ENCODE measurements at regions of chr5 and their contacts with region 1.

Region 1: GRCh38 chr5:40736103-40736875 is 19.5 kb downstream of the TTC33 start:
- DNase-seq: no peak
- H3K4me3 ChIP-seq: no peak overlapping the region
- CTCF ChIP-seq: peak; percentile 52

Region 2: GRCh38 chr5:39948867-39949468 is 787.3 kb before region 1 on chr5:
- CTCF ChIA-PET with region 1: interaction called, 16 read pairs
- POLR2A ChIA-PET with region 1: no interaction called
- DNase-seq: peak; percentile 19
- H3K4me3 ChIP-seq: no peak overlapping the region
- CTCF ChIP-seq: peak; percentile 46

Region 3: GRCh38 chr5:40688127-40688761 is 48.0 kb before region 1 on chr5:
- CTCF ChIA-PET with region 1: interaction called, 20 read pairs
- POLR2A ChIA-PET with region 1: interaction called, 3 read pairs
- DNase-seq: no peak
- H3K4me3 ChIP-seq: no peak overlapping the region
- CTCF ChIP-seq: peak; percentile 72

Region 4: DNA sequence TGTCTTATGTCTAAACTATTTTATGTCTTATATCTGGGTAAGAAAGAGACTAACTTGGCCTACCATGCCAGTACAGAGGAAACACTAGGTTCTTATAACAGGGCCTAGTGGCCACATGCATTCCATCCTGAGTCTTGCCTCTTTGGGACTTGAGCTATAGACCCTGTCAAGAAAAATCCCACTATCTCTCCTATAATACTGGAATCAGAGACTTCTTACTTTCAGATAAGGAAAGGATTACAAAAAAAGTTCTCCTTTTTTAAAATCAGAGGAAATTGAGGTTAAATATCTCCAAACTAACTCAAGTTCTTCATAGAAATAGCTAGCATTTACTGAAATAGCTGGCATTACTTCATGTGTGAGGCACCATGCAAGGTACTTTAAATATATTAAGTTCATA is 22.3 kb before region 1 on chr5:
- CTCF ChIA-PET with region 1: interaction called, 10 read pairs
- POLR2A ChIA-PET with region 1: no interaction called
- DNase-seq: no peak
- H3K4me3 ChIP-seq: no peak overlapping the region
- CTCF ChIP-seq: no peak

Region 5: GRCh38 chr5:40720069-40720468 is 16.2 kb before region 1 on chr5:
- CTCF ChIA-PET with region 1: interaction called, 10 read pairs
- POLR2A ChIA-PET with region 1: no interaction called
- DNase-seq: no peak
- H3K4me3 ChIP-seq: no peak overlapping the region
- CTCF ChIP-seq: no peak

Measured in AG04449 (cell line).